Naive thymus-derived CD4-positive, alpha-beta T cell (primary cell): ENCODE measurements at regions of chr12 and their contacts with region 1.

Region 1: GRCh38 chr12:107317751-107318613 is 224.6 kb upstream of the CRY1 start:
- DNase-seq: peak; percentile 67 to 89 (median 85)
- ATAC-seq: peak; percentile 78
- H3K4me3 ChIP-seq: peak overlapping the region; percentile 66
- H3K4me3 Mint-ChIP-seq: peak overlapping the region; percentile 84 to 98 (median 88)
- H3K27ac ChIP-seq: peak overlapping the region; percentile 89
- H3K27ac Mint-ChIP-seq: peak overlapping the region; percentile 34 to 89 (median 62)
- H3K4me1 ChIP-seq: peaks cover 12 to 21% of the 10 kb centered on the region in 2 donors
- H3K4me1 Mint-ChIP-seq: peaks cover 11 to 38% (median 28%) of the 10 kb centered on the region in 7 donors
- H3K27me3 ChIP-seq: no peaks in the 10 kb centered on the region
- H3K27me3 Mint-ChIP-seq: peaks cover 0 to 39% (median 0%) of the 10 kb centered on the region in 5 donors

Region 2: GRCh38 chr12:106955377-106956047 is 362.5 kb before region 1 on chr12 and contains the start of gene TMEM263:
- CTCF ChIA-PET with region 1: no interaction called
- POLR2A ChIA-PET with region 1: interaction called, 3 read pairs
- intact Hi-C with region 1: loop called (anchors 2 kb)
- DNase-seq: peak; percentile 78 to 91 (median 86)
- ATAC-seq: peak; percentile 90
- H3K4me3 ChIP-seq: peak within 1 kb of the TSS; percentile 94
- H3K4me3 Mint-ChIP-seq: peak within 1 kb of the TSS; percentile 88 to 99 (median 96)
- H3K27ac ChIP-seq: peak within 1 kb of the TSS; percentile 94
- H3K27ac Mint-ChIP-seq: peak within 1 kb of the TSS; percentile 93 to 97 (median 96)
- H3K4me1 ChIP-seq: peaks cover 8 to 10% of the 10 kb centered on the region in 2 donors
- H3K4me1 Mint-ChIP-seq: peaks cover 17 to 57% (median 38%) of the 10 kb centered on the region in 7 donors
- H3K27me3 ChIP-seq: no peaks in the 10 kb centered on the region
- H3K27me3 Mint-ChIP-seq: peaks cover 0 to 11% (median 0%) of the 10 kb centered on the region in 5 donors
- total RNA-seq, gene TMEM263: 20.0 to 45.5 (median 31.5) TPM

Region 3: GRCh38 chr12:107007411-107007810 is 310.6 kb before region 1 on chr12:
- CTCF ChIA-PET with region 1: no interaction called
- POLR2A ChIA-PET with region 1: no interaction called
- intact Hi-C with region 1: no loop called
- DNase-seq: no peak
- ATAC-seq: no peak
- H3K4me3 ChIP-seq: no peak overlapping the region
- H3K4me3 Mint-ChIP-seq: no peak overlapping the region
- H3K27ac ChIP-seq: no peak overlapping the region
- H3K27ac Mint-ChIP-seq: peak overlapping the region in 1 of 9 donors; percentile 31
- H3K4me1 ChIP-seq: no peaks in the 10 kb centered on the region
- H3K4me1 Mint-ChIP-seq: peaks cover 0 to 1% (median 0%) of the 10 kb centered on the region in 7 donors
- H3K27me3 ChIP-seq: no peaks in the 10 kb centered on the region
- H3K27me3 Mint-ChIP-seq: no peaks in the 10 kb centered on the region

Region 4: GRCh38 chr12:107287436-107288413 is 30.3 kb before region 1 on chr12:
- CTCF ChIA-PET with region 1: no interaction called
- POLR2A ChIA-PET with region 1: no interaction called
- intact Hi-C with region 1: loop called in 1 of 2 experiments (anchors 1 kb)
- DNase-seq: peak in 1 of 9 donors; percentile 37
- ATAC-seq: peak; percentile 37
- H3K4me3 ChIP-seq: no peak overlapping the region
- H3K4me3 Mint-ChIP-seq: peak overlapping the region in 1 of 10 donors; percentile 68
- H3K27ac ChIP-seq: no peak overlapping the region
- H3K27ac Mint-ChIP-seq: peak overlapping the region in 1 of 9 donors; percentile 65
- H3K4me1 ChIP-seq: peaks cover 0 to 4% of the 10 kb centered on the region in 2 donors
- H3K4me1 Mint-ChIP-seq: peaks cover 0 to 26% (median 9%) of the 10 kb centered on the region in 7 donors
- H3K27me3 ChIP-seq: no peaks in the 10 kb centered on the region
- H3K27me3 Mint-ChIP-seq: no peaks in the 10 kb centered on the region

Region 5: GRCh38 chr12:107372229-107372658 is 54.3 kb after region 1 on chr12:
- CTCF ChIA-PET with region 1: interaction called, 7 read pairs
- POLR2A ChIA-PET with region 1: interaction called, 112 read pairs
- intact Hi-C with region 1: loop called (anchors 1 kb)
- DNase-seq: peak in 8 of 9 donors; percentile 37 to 74 (median 68)
- ATAC-seq: peak; percentile 76
- H3K4me3 ChIP-seq: peak overlapping the region; percentile 20
- H3K4me3 Mint-ChIP-seq: peak overlapping the region; percentile 63 to 85 (median 81)
- H3K27ac ChIP-seq: peak overlapping the region; percentile 64
- H3K27ac Mint-ChIP-seq: peak overlapping the region; percentile 88 to 96 (median 94)
- H3K4me1 ChIP-seq: peaks cover 50 to 73% of the 10 kb centered on the region in 2 donors
- H3K4me1 Mint-ChIP-seq: peaks cover 68 to 89% (median 86%) of the 10 kb centered on the region in 7 donors
- H3K27me3 ChIP-seq: no peaks in the 10 kb centered on the region
- H3K27me3 Mint-ChIP-seq: no peaks in the 10 kb centered on the region

Region 6: GRCh38 chr12:107402041-107403022 is 84.3 kb after region 1 on chr12:
- CTCF ChIA-PET with region 1: interaction called, 13 read pairs
- POLR2A ChIA-PET with region 1: interaction called, 33 read pairs
- intact Hi-C with region 1: loop called (anchors 1 kb)
- DNase-seq: peak; percentile 16 to 69 (median 61)
- ATAC-seq: peak; percentile 78
- H3K4me3 ChIP-seq: no peak overlapping the region
- H3K4me3 Mint-ChIP-seq: peak overlapping the region in 4 of 10 donors; percentile 12 to 48 (median 24)
- H3K27ac ChIP-seq: no peak overlapping the region
- H3K27ac Mint-ChIP-seq: peak overlapping the region in 7 of 9 donors; percentile 34 to 90 (median 57)
- H3K4me1 ChIP-seq: no peaks in the 10 kb centered on the region
- H3K4me1 Mint-ChIP-seq: peaks cover 10 to 48% (median 26%) of the 10 kb centered on the region in 7 donors
- H3K27me3 ChIP-seq: no peaks in the 10 kb centered on the region
- H3K27me3 Mint-ChIP-seq: no peaks in the 10 kb centered on the region

Region 7: DNA sequence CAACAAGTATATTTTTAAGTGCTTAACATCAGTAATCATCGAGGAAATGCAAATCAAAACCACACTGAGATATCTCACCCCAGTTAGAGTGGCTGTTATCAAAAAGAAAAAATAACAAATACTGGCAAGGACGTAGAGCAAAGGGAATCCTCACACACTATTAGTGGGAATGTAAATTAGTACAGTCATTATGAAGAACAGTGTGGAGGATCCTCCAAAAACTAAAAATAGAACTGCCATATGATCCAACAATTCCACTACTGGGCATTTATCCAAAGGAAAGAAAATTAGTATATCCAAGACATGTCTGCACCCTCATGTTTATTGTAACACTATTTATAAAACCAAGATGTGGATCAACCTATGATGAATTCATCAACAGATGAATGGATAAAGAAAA is 218.6 kb after region 1 on chr12:
- CTCF ChIA-PET with region 1: no interaction called
- POLR2A ChIA-PET with region 1: no interaction called
- intact Hi-C with region 1: no loop called
- DNase-seq: no peak
- ATAC-seq: no peak
- H3K4me3 ChIP-seq: no peak overlapping the region
- H3K4me3 Mint-ChIP-seq: no peak overlapping the region
- H3K27ac ChIP-seq: no peak overlapping the region
- H3K27ac Mint-ChIP-seq: peak overlapping the region in 1 of 9 donors; percentile 23
- H3K4me1 ChIP-seq: no peaks in the 10 kb centered on the region
- H3K4me1 Mint-ChIP-seq: peaks cover 7 to 73% (median 36%) of the 10 kb centered on the region in 7 donors
- H3K27me3 ChIP-seq: no peaks in the 10 kb centered on the region
- H3K27me3 Mint-ChIP-seq: no peaks in the 10 kb centered on the region

Region 8: GRCh38 chr12:107685360-107686248 is 367.6 kb after region 1 on chr12 and contains the start of gene PWP1:
- CTCF ChIA-PET with region 1: no interaction called
- POLR2A ChIA-PET with region 1: no interaction called
- intact Hi-C with region 1: loop called (anchors 1 to 2 kb)
- DNase-seq: peak; percentile 93 to 97 (median 95)
- ATAC-seq: peak; percentile 93
- H3K4me3 ChIP-seq: peak within 1 kb of the TSS; percentile 78
- H3K4me3 Mint-ChIP-seq: peak within 1 kb of the TSS; percentile 90 to 99 (median 95)
- H3K27ac ChIP-seq: peak within 1 kb of the TSS; percentile 88
- H3K27ac Mint-ChIP-seq: peak within 1 kb of the TSS; percentile 90 to 99 (median 97)
- H3K4me1 ChIP-seq: peaks cover 12 to 19% of the 10 kb centered on the region in 2 donors
- H3K4me1 Mint-ChIP-seq: peaks cover 23 to 40% (median 35%) of the 10 kb centered on the region in 7 donors
- H3K27me3 ChIP-seq: no peaks in the 10 kb centered on the region
- H3K27me3 Mint-ChIP-seq: peaks cover 0 to 3% (median 0%) of the 10 kb centered on the region in 5 donors
- total RNA-seq, gene PWP1: 20.9 to 42.5 (median 25.7) TPM

Region 9: GRCh38 chr12:108017472-108018057 is 699.6 kb after region 1 on chr12:
- CTCF ChIA-PET with region 1: no interaction called
- POLR2A ChIA-PET with region 1: no interaction called
- intact Hi-C with region 1: no loop called
- DNase-seq: no peak
- ATAC-seq: no peak
- H3K4me3 ChIP-seq: no peak overlapping the region
- H3K4me3 Mint-ChIP-seq: no peak overlapping the region
- H3K27ac ChIP-seq: no peak overlapping the region
- H3K27ac Mint-ChIP-seq: no peak overlapping the region
- H3K4me1 ChIP-seq: no peaks in the 10 kb centered on the region
- H3K4me1 Mint-ChIP-seq: no peaks in the 10 kb centered on the region
- H3K27me3 ChIP-seq: no peaks in the 10 kb centered on the region
- H3K27me3 Mint-ChIP-seq: peaks cover 0 to 47% (median 32%) of the 10 kb centered on the region in 5 donors